Spleen (tissue), 13 donors: ENCODE measurements at regions of chr9 and their contacts with region 1.

Region 1: DNA sequence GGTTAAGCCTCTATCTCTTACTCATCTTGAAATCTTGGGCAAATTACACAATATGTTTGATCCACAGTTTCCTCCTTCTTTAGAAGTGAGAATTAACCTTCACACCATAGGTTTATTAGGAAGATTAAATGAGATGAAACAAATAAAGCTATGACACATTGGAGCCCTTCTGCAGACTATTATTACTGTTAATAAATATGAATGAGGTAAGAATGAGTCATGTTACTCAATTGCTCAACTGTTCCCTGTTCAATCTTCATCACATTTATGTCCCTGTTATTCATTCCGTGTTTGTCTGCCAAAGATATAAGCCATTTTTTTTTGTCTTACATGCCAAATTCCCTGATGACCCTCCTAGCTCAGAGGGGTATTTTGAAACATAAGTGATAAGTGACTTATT is 52.1 kb upstream of the PAPPA start:
- DNase-seq: no peak
- H3K4me3 ChIP-seq: no peak overlapping the region
- H3K27ac ChIP-seq: no peak overlapping the region
- H3K4me1 ChIP-seq: no peaks in the 10 kb centered on the region
- H3K27me3 ChIP-seq: no peaks in the 10 kb centered on the region
- CTCF ChIP-seq: no peak
- POLR2A ChIP-seq: no peak

Region 2: DNA sequence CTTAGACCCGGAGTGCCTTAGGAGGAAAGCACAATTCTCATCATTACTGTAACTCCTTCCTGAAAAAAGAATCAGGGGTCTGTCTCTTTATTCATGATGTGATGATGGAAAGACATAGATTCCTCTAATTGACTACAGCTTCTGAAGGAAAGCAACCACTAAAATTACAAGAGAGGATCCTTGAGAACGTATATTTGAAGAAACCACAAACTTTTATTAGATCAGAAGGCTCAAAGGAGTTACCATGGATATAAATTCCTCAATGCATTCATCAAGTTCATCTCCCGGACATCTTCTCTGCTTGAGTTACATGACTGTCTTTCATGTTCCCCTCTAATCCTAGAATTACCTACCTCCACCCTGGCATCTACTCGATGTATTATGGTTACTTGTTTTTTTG is 52.1 kb before region 1 on chr9:
- intact Hi-C with region 1: loop called (anchors 10 kb)
- DNase-seq: no peak
- H3K4me3 ChIP-seq: no peak overlapping the region
- H3K27ac ChIP-seq: no peak overlapping the region
- H3K4me1 ChIP-seq: no peaks in the 10 kb centered on the region
- H3K27me3 ChIP-seq: peaks cover 0 to 2% (median 0%) of the 10 kb centered on the region in 7 donors
- CTCF ChIP-seq: no peak
- POLR2A ChIP-seq: no peak